H1 (cell line): ENCODE measurements at regions of chr15 and their contacts with region 1.

Region 1: GRCh38 chr15:33700695-33701304 is 267.5 kb upstream of the CHRM5 start:
- DNase-seq: peak; percentile 65 to 89
- H3K4me3 ChIP-seq: no peak overlapping the region
- H3K27ac ChIP-seq: no peak overlapping the region
- H3K4me1 ChIP-seq: peaks cover 0 to 4% (median 0%) of the 10 kb centered on the region in 4 experiments; a peak in 4 of 7 replicates
- H3K27me3 ChIP-seq: no peaks in the 10 kb centered on the region
- CTCF ChIP-seq: peak; percentile 86 to 100 (median 98)
- EP300 ChIP-seq: no peak
- POLR2A ChIP-seq: no peak
- RAD21 ChIP-seq: peak; percentile 94 to 98

Region 2: DNA sequence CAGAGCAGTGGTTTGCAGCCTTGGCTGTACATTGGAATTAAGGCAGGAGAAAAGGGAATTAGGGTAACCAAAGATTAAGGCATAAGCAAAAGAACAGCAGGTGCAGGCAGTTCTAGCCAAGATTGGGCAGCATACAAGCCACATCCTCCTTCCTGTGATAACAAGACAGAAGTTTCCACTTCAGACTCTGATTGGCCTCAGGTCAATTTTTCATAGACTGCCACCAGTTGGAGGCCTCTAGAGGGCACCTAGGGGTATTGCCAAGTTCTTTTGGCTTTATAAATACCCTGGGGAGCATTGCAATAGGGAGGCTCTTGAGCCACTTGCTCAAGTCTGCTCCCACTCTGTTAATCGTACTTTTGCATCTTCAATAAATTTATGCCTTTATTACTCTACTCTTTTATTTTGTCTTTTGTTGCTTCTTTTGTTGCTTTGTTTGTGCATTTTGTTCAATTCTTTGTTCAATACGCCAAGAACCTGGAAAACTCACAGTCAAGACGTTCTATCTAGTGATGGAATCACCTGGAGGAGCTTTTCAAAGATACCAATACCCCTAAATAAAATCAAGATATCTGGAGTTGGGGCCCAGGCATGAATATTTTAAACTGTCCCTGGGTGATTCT is 474.1 kb before region 1 on chr15:
- CTCF ChIA-PET with region 1: interaction called, 11 read pairs
- POLR2A ChIA-PET with region 1: no interaction called
- DNase-seq: no peak
- H3K4me3 ChIP-seq: no peak overlapping the region
- H3K27ac ChIP-seq: no peak overlapping the region
- H3K4me1 ChIP-seq: no peaks in the 10 kb centered on the region
- H3K27me3 ChIP-seq: no peaks in the 10 kb centered on the region
- CTCF ChIP-seq: peak in 2 of 3 experiments; percentile 46 to 58; a peak in 3 of 4 replicates
- EP300 ChIP-seq: no peak
- POLR2A ChIP-seq: no peak
- RAD21 ChIP-seq: peak; percentile 26 to 51; a peak in 3 of 4 replicates

Region 3: GRCh38 chr15:33284336-33284735 is 416.5 kb before region 1 on chr15:
- CTCF ChIA-PET with region 1: interaction called, 81 read pairs
- POLR2A ChIA-PET with region 1: no interaction called
- DNase-seq: no peak
- H3K4me3 ChIP-seq: no peak overlapping the region
- H3K27ac ChIP-seq: no peak overlapping the region
- H3K4me1 ChIP-seq: no peaks in the 10 kb centered on the region; a peak in 1 of 7 replicates
- H3K27me3 ChIP-seq: no peaks in the 10 kb centered on the region
- CTCF ChIP-seq: no peak
- EP300 ChIP-seq: no peak
- POLR2A ChIP-seq: no peak
- RAD21 ChIP-seq: no peak

Region 4: GRCh38 chr15:33309602-33310276 is 391.1 kb before region 1 on chr15:
- CTCF ChIA-PET with region 1: interaction called, 24 read pairs
- POLR2A ChIA-PET with region 1: interaction called, 4 read pairs
- DNase-seq: peak in 1 of 2 experiments; percentile 49
- H3K4me3 ChIP-seq: peak overlapping the region in 2 of 4 experiments; percentile 55 to 72; a peak in 3 of 8 replicates
- H3K27ac ChIP-seq: no peak overlapping the region
- H3K4me1 ChIP-seq: peaks cover 0 to 2% (median 0%) of the 10 kb centered on the region in 4 experiments; a peak in 3 of 7 replicates
- H3K27me3 ChIP-seq: peaks cover 15 to 37% (median 32%) of the 10 kb centered on the region in 4 experiments
- CTCF ChIP-seq: peak; percentile 42 to 63 (median 50)
- EP300 ChIP-seq: no peak
- POLR2A ChIP-seq: no peak
- RAD21 ChIP-seq: peak; percentile 70 to 77

Region 5: DNA sequence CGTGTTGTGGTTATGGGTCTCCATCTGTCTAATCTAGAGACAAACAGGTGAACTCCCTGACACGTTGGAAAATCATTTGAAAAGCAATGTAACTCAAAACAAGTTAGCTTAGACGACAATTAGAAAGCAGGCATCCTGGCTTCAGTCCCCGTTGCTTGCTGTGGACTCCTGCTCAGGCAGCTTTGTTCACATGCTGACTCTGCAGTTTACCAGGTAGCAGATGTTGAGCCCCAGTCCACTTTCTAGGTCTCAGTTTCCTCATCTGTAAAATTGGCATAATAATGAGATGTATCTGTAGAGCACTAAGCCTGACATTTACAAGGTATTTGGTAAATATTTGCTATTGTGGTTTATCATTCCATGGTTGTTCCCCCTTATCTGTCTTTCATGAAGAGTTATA is 59.7 kb before region 1 on chr15:
- CTCF ChIA-PET with region 1: interaction called, 11 read pairs
- POLR2A ChIA-PET with region 1: no interaction called
- DNase-seq: no peak
- H3K4me3 ChIP-seq: no peak overlapping the region
- H3K27ac ChIP-seq: no peak overlapping the region
- H3K4me1 ChIP-seq: no peaks in the 10 kb centered on the region
- H3K27me3 ChIP-seq: no peaks in the 10 kb centered on the region
- CTCF ChIP-seq: no peak
- EP300 ChIP-seq: no peak
- POLR2A ChIP-seq: no peak
- RAD21 ChIP-seq: no peak

Region 6: DNA sequence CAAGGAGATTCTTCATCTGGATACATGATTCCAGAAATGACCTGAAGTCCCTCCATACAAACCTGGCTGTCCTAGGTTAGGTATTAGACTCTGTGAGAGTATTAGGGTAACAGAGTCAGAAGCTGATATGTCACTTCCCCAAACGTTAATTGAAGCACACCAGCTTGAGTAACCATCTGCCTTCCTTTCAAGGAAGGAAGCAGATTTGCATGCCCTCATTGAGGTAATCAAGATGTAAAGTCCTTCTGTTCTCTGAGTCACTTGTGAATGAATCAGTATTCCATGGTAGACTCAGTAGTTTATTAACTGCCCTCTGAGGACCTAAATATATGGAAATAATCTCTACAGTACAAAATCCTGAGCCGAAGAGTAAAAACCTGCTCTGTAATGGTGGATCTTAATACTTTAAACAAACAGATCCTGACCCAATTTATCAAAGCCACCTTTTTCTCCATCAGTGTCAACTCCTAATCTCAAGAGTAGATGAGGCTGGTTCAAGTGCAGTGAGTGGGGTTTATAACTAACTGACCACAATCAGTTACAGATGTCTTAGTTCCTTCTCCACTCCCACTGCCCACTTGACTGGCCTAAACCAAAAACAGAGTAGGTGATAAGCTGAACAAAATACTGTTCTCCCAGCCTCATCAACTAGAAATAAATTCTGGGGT is 21.3 kb after region 1 on chr15:
- CTCF ChIA-PET with region 1: interaction called, 26 read pairs
- POLR2A ChIA-PET with region 1: no interaction called
- DNase-seq: no peak
- H3K4me3 ChIP-seq: no peak overlapping the region
- H3K27ac ChIP-seq: no peak overlapping the region
- H3K4me1 ChIP-seq: no peaks in the 10 kb centered on the region
- H3K27me3 ChIP-seq: no peaks in the 10 kb centered on the region
- CTCF ChIP-seq: no peak
- EP300 ChIP-seq: no peak
- POLR2A ChIP-seq: no peak
- RAD21 ChIP-seq: no peak

Region 7: DNA sequence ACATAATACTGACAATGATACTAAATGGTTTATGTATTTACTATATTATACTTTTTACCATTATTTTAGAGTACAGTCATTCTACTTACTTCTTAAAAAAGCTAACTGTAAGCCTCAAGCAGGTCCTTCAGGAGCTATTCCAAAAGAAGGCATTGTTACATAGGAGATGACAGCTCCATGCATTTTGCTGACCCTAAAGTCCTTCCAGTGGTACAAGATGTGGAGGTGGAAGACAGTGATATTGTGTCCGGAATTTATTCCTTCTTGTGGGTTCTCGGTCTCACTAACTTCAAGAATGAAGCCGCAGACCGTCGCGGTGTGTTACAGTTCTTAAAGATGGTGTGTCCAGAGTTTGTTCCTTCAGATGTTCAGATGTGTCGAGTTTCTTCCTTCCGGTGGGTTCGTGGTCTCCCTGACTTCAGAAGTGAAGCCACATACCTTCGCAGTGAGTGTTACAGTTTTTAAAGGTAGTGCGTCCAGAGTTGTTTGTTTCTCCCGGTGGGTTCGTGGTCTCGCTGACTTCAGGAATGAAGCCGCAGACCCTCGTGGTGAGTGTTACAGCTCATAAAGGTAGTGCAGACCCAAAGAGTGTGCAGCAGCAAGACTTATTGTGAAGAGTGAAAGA is 317.3 kb after region 1 on chr15:
- CTCF ChIA-PET with region 1: no interaction called
- POLR2A ChIA-PET with region 1: no interaction called
- DNase-seq: no peak
- H3K4me3 ChIP-seq: no peak overlapping the region
- H3K27ac ChIP-seq: no peak overlapping the region
- H3K4me1 ChIP-seq: no peaks in the 10 kb centered on the region
- H3K27me3 ChIP-seq: no peaks in the 10 kb centered on the region
- CTCF ChIP-seq: no peak
- EP300 ChIP-seq: no peak
- POLR2A ChIP-seq: no peak
- RAD21 ChIP-seq: no peak